ENCODE measurements at regions of chr12 and their contacts with region 1.

Region 1: DNA sequence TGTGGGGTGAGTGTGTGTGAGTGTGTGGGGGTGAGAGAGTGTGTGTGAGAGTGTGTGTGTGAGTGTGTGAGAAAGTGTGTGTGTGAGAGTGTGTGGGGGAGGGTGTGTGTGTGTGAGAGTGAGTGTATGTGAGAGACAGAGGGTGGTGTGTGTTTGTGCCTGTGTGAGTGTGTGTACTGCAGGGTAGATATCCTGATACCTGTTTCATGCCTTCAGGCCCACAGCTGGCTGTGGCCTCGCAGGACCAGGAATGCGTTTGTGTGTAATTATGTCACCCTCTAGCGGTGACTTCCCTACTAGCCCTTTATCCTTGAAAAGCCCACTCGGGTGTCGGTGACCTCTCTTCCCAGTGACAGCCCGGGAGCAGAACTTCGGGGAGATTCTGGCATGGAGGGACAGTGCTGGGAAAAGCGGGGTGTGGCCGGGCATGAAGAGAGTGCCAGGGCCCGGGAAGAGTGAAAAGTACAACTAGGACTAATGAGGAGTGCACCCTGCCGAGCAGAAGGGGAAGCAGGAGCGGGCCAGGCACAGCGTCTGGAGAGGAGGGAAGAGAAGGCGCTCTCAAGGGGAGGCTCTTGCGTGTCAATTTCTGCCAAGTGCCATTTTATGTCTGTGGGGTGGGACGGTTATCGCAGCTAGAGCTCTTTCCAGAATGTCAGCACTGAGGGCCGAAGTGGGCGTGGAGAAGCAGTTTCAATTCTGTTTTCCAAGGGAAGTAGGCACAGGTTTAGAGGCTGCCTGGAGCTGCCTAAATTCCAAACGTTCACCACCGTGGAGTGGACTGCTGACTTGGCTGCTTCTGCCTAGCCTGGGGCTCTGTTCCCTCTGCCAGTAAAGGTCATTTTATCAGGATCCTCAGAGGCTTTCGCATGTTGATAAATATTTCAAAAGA is 11.0 kb upstream of the FBXL14 start:
- DNase-seq: peak; percentile 86 to 88
- ATAC-seq: peak; percentile 91 to 92
- H3K4me3 ChIP-seq: peak overlapping the region; percentile 48
- H3K27ac ChIP-seq: peak overlapping the region; percentile 63 to 83
- H3K4me1 ChIP-seq: peaks cover 24% of the 10 kb centered on the region
- CTCF ChIP-seq: peak; percentile 81
- EP300 ChIP-seq: no peak
- POLR2A ChIP-seq: no peak
- RAD21 ChIP-seq: peak; percentile 81 to 89

Region 2: DNA sequence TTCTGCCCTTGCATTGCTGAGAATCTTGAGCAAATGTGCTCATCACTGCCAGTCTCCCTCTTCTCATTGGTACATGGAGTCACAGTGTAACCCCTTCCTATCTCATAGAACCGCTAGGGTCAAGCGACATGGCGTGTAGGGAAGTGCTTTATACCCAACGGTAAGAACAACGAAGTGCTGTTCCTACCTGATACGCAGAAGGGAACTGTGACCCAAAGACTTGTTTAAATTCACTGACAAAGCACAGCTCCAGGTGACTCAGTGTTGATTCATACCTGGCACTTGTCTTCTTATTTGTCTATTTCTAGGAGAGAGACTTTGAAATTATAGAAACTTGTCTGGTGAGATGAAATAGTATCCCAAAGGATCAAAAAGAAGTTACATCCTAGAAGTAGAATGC is 64.7 kb before region 1 on chr12:
- CTCF ChIA-PET with region 1: no interaction called
- POLR2A ChIA-PET with region 1: no interaction called
- DNase-seq: no peak
- ATAC-seq: peak in 1 of 2 experiments; percentile 19; a peak in 1 of 6 replicates
- H3K4me3 ChIP-seq: no peak overlapping the region
- H3K27ac ChIP-seq: no peak overlapping the region
- H3K4me1 ChIP-seq: peaks cover 9% of the 10 kb centered on the region; the same call in 2 of the 3 replicates
- CTCF ChIP-seq: no peak
- EP300 ChIP-seq: no peak
- POLR2A ChIP-seq: no peak
- RAD21 ChIP-seq: no peak

Region 3: GRCh38 chr12:1594261-1595025 is 10.9 kb before region 1 on chr12 and contains the start of gene FBXL14:
- CTCF ChIA-PET with region 1: interaction called, 18 read pairs
- POLR2A ChIA-PET with region 1: interaction called, 5 read pairs
- DNase-seq: peak; percentile 76 to 87
- ATAC-seq: peak; percentile 79 to 84
- H3K4me3 ChIP-seq: peak within 1 kb of the TSS; percentile 68
- H3K27ac ChIP-seq: peak within 1 kb of the TSS; percentile 91 to 99
- H3K4me1 ChIP-seq: peaks cover 38% of the 10 kb centered on the region
- CTCF ChIP-seq: no peak
- EP300 ChIP-seq: no peak
- POLR2A ChIP-seq: peak; percentile 65
- RAD21 ChIP-seq: no peak
- polyA plus RNA-seq, gene FBXL14: 6.7 and 8.2 TPM in 2 replicates

Region 4: GRCh38 chr12:1616233-1617066 is 11.1 kb after region 1 on chr12:
- CTCF ChIA-PET with region 1: interaction called, 22 read pairs
- POLR2A ChIA-PET with region 1: no interaction called
- DNase-seq: no peak
- ATAC-seq: no peak
- H3K4me3 ChIP-seq: no peak overlapping the region
- H3K27ac ChIP-seq: no peak overlapping the region
- H3K4me1 ChIP-seq: 0 out of 3 replicates have a peak, but pooled peaks cover 6% of the 10 kb centered on the region
- CTCF ChIP-seq: no peak
- EP300 ChIP-seq: no peak
- POLR2A ChIP-seq: no peak
- RAD21 ChIP-seq: no peak

Region 5: DNA sequence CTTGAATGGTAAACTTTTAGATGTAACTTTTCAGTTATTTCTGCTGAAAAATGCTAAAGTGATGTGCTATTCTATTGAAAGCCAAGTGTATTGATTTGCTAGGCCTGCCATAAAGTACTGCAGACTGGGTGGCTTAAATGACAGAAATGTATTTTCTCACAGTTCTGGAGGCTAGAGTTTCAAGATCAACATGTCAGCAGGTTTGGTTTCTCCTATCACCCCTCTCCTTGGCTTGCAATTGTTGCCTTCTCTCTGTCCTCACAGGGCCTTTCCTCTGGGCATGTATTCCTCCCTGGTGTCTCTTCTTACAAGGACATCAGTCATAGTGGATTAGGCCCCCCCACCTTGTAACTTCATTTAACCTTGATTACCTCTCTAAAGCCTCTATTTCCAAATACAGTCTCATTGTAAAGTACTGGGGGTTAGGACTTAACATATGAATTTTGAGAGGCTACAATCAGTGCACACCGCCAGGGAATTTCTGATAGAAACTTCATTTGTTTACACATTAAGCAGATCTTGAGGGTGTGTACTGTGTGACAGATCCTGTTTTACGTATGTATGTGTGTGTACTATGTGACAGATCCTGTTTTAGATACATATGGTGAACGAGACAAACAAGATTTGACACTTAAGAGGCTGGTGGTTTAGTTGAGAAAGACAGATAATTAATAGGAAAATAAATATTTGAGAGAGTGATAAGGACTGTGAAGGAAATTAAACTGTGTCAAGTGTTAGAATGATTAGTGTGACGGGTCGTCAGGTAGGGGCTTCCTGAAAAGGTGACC is 135.0 kb after region 1 on chr12:
- CTCF ChIA-PET with region 1: no interaction called
- POLR2A ChIA-PET with region 1: no interaction called
- DNase-seq: no peak
- ATAC-seq: peak in 1 of 2 experiments; percentile 25; a peak in 1 of 6 replicates
- H3K4me3 ChIP-seq: no peak overlapping the region
- H3K27ac ChIP-seq: no peak overlapping the region
- H3K4me1 ChIP-seq: peaks cover 16% of the 10 kb centered on the region; the same call in 1 of the 3 replicates
- CTCF ChIP-seq: no peak
- EP300 ChIP-seq: no peak
- POLR2A ChIP-seq: no peak
- RAD21 ChIP-seq: no peak

Measured in A549 (cell line).